Activated CD8-positive, alpha-beta T cell treated with anti-CD3 and anti-CD28 coated beads for 36 hours (primary cell): ENCODE measurements at regions of chr1 and their contacts with region 1.

Region 1: GRCh38 chr1:206912445-206913095 is 9.2 kb downstream of the FCMR start:
- DNase-seq: peak; percentile 77
- ATAC-seq: peak; percentile 45
- H3K4me3 Mint-ChIP-seq: no peak overlapping the region
- H3K27ac Mint-ChIP-seq: peak overlapping the region; percentile 63
- H3K4me1 Mint-ChIP-seq: peaks cover 86% of the 10 kb centered on the region
- H3K27me3 Mint-ChIP-seq: no peaks in the 10 kb centered on the region
- CTCF ChIP-seq: peak; percentile 80

Region 2: GRCh38 chr1:206606856-206607255 is 305.7 kb before region 1 on chr1:
- CTCF ChIA-PET with region 1: interaction called, 10 read pairs
- POLR2A ChIA-PET with region 1: no interaction called
- intact Hi-C with region 1: no loop called
- DNase-seq: peak; percentile 49
- ATAC-seq: no peak
- H3K4me3 Mint-ChIP-seq: no peak overlapping the region
- H3K27ac Mint-ChIP-seq: peak overlapping the region; percentile 36
- H3K4me1 Mint-ChIP-seq: peaks cover 44% of the 10 kb centered on the region
- H3K27me3 Mint-ChIP-seq: no peaks in the 10 kb centered on the region
- CTCF ChIP-seq: peak; percentile 53

Region 3: GRCh38 chr1:206725109-206725963 is 187.2 kb before region 1 on chr1:
- CTCF ChIA-PET with region 1: interaction called, 87 read pairs
- POLR2A ChIA-PET with region 1: no interaction called
- intact Hi-C with region 1: no loop called
- DNase-seq: peak; percentile 83
- ATAC-seq: peak; percentile 57
- H3K4me3 Mint-ChIP-seq: no peak overlapping the region
- H3K27ac Mint-ChIP-seq: no peak overlapping the region
- H3K4me1 Mint-ChIP-seq: peaks cover 57% of the 10 kb centered on the region
- H3K27me3 Mint-ChIP-seq: no peaks in the 10 kb centered on the region
- CTCF ChIP-seq: peak; percentile 6

Region 4: DNA sequence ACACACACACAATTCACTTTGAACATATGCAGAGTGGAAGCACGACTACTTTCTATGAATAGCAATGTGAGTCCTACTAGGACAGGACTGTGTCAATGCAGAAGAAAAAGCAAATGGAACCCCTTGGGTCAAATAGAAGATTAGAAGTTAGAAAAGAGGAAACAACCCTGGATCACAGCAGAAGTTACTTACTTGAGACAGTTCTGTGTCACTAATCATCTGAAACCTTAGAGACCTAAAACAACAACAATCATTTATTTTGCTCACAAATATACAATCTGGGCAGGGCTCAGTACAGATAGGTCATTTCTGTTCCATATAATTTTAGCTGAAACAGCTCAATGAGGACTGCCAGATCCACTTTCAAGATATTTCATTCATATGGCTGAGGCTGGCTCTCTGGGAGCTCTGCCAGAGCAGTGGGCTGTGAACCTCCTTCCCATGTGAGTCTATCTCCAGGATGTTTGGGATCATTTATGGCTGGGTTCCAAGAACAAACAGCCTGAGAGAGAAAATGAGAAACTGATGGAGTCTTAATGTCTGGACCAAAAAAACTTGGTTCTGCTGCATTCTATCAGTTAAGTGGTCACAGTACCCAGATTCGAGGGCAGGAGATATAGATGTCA is 97.7 kb before region 1 on chr1:
- CTCF ChIA-PET with region 1: interaction called, 196 read pairs
- POLR2A ChIA-PET with region 1: interaction called, 3 read pairs
- intact Hi-C with region 1: no loop called
- DNase-seq: no peak
- ATAC-seq: no peak
- H3K4me3 Mint-ChIP-seq: no peak overlapping the region
- H3K27ac Mint-ChIP-seq: no peak overlapping the region
- H3K4me1 Mint-ChIP-seq: peaks cover 24% of the 10 kb centered on the region
- H3K27me3 Mint-ChIP-seq: no peaks in the 10 kb centered on the region
- CTCF ChIP-seq: no peak

Region 5: GRCh38 chr1:206865013-206865671 is 47.4 kb before region 1 on chr1 and contains the start of gene IL20:
- CTCF ChIA-PET with region 1: interaction called, 100 read pairs
- POLR2A ChIA-PET with region 1: interaction called, 4 read pairs
- intact Hi-C with region 1: loop called (anchors 1 kb)
- DNase-seq: peak; percentile 92
- ATAC-seq: peak; percentile 97
- H3K4me3 Mint-ChIP-seq: no peak within 1 kb of the TSS
- H3K27ac Mint-ChIP-seq: no peak within 1 kb of the TSS
- H3K4me1 Mint-ChIP-seq: peaks cover 12% of the 10 kb centered on the region
- H3K27me3 Mint-ChIP-seq: peaks cover 2% of the 10 kb centered on the region
- CTCF ChIP-seq: peak; percentile 98
- total RNA-seq, gene IL20: not detected

Region 6: GRCh38 chr1:206925106-206925736 is 12.7 kb after region 1 on chr1:
- CTCF ChIA-PET with region 1: interaction called, 289 read pairs
- POLR2A ChIA-PET with region 1: interaction called, 15 read pairs
- intact Hi-C with region 1: no loop called
- DNase-seq: peak; percentile 93
- ATAC-seq: peak; percentile 67
- H3K4me3 Mint-ChIP-seq: no peak overlapping the region
- H3K27ac Mint-ChIP-seq: no peak overlapping the region
- H3K4me1 Mint-ChIP-seq: peaks cover 41% of the 10 kb centered on the region
- H3K27me3 Mint-ChIP-seq: no peaks in the 10 kb centered on the region
- CTCF ChIP-seq: no peak

Region 7: GRCh38 chr1:206992790-206993189 is 80.2 kb after region 1 on chr1:
- CTCF ChIA-PET with region 1: no interaction called
- POLR2A ChIA-PET with region 1: no interaction called
- intact Hi-C with region 1: no loop called
- DNase-seq: no peak
- ATAC-seq: no peak
- H3K4me3 Mint-ChIP-seq: no peak overlapping the region
- H3K27ac Mint-ChIP-seq: no peak overlapping the region
- H3K4me1 Mint-ChIP-seq: no peaks in the 10 kb centered on the region
- H3K27me3 Mint-ChIP-seq: peaks cover 7% of the 10 kb centered on the region
- CTCF ChIP-seq: no peak

Region 8: GRCh38 chr1:207004981-207005830 is 92.6 kb after region 1 on chr1:
- CTCF ChIA-PET with region 1: no interaction called
- POLR2A ChIA-PET with region 1: no interaction called
- intact Hi-C with region 1: no loop called
- DNase-seq: peak; percentile 62
- ATAC-seq: peak; percentile 47
- H3K4me3 Mint-ChIP-seq: no peak overlapping the region
- H3K27ac Mint-ChIP-seq: no peak overlapping the region
- H3K4me1 Mint-ChIP-seq: no peaks in the 10 kb centered on the region
- H3K27me3 Mint-ChIP-seq: peaks cover 3% of the 10 kb centered on the region
- CTCF ChIP-seq: peak; percentile 74

Region 9: GRCh38 chr1:207058878-207059867 is 146.6 kb after region 1 on chr1:
- CTCF ChIA-PET with region 1: no interaction called
- POLR2A ChIA-PET with region 1: no interaction called
- intact Hi-C with region 1: no loop called
- DNase-seq: no peak
- ATAC-seq: no peak
- H3K4me3 Mint-ChIP-seq: no peak overlapping the region
- H3K27ac Mint-ChIP-seq: no peak overlapping the region
- H3K4me1 Mint-ChIP-seq: peaks cover 2% of the 10 kb centered on the region
- H3K27me3 Mint-ChIP-seq: no peaks in the 10 kb centered on the region
- CTCF ChIP-seq: no peak